Natural killer cell (primary cell): ENCODE measurements at regions of chrX and their contacts with region 1.

Region 1: DNA sequence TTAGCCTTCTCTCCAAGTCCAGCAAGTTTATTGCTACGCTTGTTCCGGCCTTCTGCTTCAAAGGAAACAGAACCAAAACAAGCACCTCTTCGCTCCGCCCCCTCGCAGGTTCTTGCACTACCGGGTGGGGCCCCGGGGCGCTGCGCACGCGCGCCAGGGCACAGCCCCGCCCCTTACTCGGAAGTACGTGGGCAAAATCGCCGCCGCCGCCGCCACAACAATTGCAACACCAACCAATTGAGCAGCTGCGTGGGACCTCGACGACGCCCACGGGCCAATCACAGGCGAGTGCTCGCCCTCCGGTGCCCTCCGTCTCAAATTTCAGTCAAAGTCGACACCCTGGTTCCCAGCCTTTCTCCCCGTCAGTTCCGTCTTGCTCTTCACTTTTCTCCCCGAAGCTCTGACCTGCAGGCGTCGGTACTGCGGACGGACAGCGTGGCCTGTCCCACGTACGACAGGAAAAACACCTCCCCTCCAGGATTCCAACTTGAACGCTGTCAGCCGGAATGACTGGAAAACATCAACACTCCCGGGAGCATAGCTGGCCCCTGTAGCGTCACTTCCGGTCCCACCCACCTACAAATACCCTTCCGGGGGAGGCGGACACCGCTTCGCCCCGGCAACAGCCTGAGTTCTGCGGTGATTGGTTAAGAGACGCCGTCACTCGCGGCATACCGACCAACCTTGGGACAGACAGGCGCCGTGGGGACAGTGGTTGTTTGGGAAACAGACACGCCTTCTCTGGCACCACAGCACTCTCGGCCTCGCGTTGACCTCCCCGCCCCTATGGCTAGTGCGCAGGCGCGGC is 624 bp upstream of the OTUD5 start:
- DNase-seq: peak; percentile 88 to 97
- ATAC-seq: peak; percentile 75 to 88 (median 79)
- H3K4me3 ChIP-seq: peak overlapping the region; percentile 57
- H3K4me3 Mint-ChIP-seq: peak overlapping the region; percentile 96
- H3K27ac ChIP-seq: peak overlapping the region; percentile 98
- H3K27ac Mint-ChIP-seq: peak overlapping the region; percentile 100
- H3K4me1 ChIP-seq: peaks cover 42% of the 10 kb centered on the region
- H3K4me1 Mint-ChIP-seq: peaks cover 24 to 45% of the 10 kb centered on the region in 2 donors
- H3K27me3 ChIP-seq: no peaks in the 10 kb centered on the region
- H3K27me3 Mint-ChIP-seq: peaks cover 0 to 7% of the 10 kb centered on the region in 2 donors
- CTCF ChIP-seq: no peak

Region 2: DNA sequence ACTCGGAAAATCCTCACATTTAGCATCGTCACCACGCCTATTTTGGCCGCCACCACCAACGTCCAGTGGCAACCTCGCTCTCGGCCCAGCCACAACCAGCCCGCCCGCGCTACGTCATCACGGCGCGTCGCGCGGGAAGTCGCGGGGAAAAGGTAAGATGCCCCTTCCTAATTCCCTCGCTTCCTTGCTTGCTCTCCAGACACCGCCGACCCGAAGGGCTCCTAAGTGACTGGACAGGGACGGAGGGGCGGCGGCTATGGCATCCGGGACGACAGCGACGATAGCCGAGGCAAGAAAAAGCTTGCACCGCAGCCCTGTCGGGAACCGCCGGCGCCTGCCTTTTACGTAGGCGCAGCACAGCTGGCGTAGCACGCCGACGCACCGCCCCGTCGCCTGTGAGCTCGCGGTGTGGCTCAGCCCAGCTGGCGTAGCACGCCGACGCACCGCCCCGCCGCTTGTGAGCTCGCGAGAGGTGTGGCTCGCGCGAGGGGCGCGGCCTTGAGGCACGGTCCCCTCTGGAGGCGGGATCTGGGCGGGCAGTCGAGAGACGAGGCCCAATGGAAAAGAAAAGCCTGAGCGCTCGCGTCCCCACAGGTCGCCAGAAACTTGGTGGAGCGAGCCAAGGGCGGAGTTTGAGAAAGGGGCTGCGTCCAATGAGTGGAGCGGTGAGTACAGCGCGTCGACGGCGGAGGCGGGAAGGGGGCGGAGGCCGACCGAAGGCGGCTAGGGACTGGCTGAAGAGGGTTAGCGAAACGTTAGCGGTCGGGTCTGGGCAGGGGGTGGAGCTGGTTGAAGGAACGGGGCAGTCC is 156.5 kb before region 1 on chrX and contains the start of gene HDAC6:
- intact Hi-C with region 1: loop called (anchors 5 kb)
- DNase-seq: peak; percentile 90 to 97
- ATAC-seq: peak; percentile 80 to 94 (median 81)
- H3K4me3 ChIP-seq: peak within 1 kb of the TSS; percentile 91
- H3K4me3 Mint-ChIP-seq: peak within 1 kb of the TSS; percentile 96
- H3K27ac ChIP-seq: peak within 1 kb of the TSS; percentile 100
- H3K27ac Mint-ChIP-seq: peak within 1 kb of the TSS; percentile 97 to 98
- H3K4me1 ChIP-seq: peaks cover 16% of the 10 kb centered on the region
- H3K4me1 Mint-ChIP-seq: peaks cover 0 to 21% of the 10 kb centered on the region in 2 donors
- H3K27me3 ChIP-seq: no peaks in the 10 kb centered on the region
- H3K27me3 Mint-ChIP-seq: peaks cover 0 to 6% of the 10 kb centered on the region in 2 donors
- CTCF ChIP-seq: no peak
- total RNA-seq, gene HDAC6: 97.4 to 118 (median 101) TPM

Region 3: DNA sequence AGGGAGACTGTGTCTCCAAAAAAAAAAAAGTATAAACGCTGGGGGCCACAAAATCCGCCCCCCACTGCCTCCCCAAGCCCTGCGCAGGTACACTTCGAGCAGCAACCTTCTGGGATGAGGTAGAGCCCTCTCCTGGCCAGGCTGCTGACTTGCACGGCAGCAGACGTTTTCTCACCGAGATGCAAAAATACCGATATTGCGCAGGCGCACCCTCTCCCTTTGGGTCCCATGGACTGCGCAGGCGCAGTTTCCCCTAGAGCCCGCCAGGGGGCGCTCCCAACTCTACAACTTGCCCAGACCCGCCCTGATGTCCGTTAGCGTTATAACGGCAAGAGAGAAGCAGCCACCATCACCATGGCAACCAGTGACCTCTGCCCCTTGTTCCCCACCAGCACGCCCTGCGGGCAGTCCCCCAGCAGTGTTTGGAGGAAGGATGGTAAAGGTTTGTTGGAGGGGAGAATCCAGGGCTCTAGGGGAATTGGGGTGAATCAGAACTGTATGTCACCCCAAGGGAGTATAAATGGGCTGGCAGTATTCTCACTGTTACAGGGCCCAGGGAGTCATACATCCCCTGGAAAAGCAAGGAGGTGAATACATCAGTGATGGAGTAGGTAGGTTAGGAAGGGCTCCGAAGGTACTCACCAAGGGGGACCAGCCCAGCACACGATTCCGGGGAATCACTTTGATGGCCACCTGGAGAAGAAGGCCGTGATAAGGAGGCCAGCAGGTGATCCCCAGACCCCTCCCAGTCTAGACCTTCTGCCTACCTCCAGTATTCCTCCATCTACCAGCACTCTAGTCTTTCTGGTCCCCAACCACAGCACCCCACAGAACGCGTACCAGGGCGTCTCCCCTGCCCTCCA is 40.7 kb before region 1 on chrX:
- intact Hi-C with region 1: loop called (anchors 1 kb)
- DNase-seq: peak; percentile 85 to 92
- ATAC-seq: peak; percentile 45 to 72 (median 58)
- H3K4me3 ChIP-seq: peak overlapping the region; percentile 91
- H3K4me3 Mint-ChIP-seq: peak overlapping the region; percentile 91
- H3K27ac ChIP-seq: peak overlapping the region; percentile 90
- H3K27ac Mint-ChIP-seq: peak overlapping the region; percentile 96 to 99
- H3K4me1 ChIP-seq: peaks cover 74% of the 10 kb centered on the region
- H3K4me1 Mint-ChIP-seq: peaks cover 48 to 53% of the 10 kb centered on the region in 2 donors
- H3K27me3 ChIP-seq: no peaks in the 10 kb centered on the region
- H3K27me3 Mint-ChIP-seq: peaks cover 0 to 6% of the 10 kb centered on the region in 2 donors
- CTCF ChIP-seq: peak; percentile 76

Region 4: GRCh38 chrX:49002091-49002935 is 44.3 kb after region 1 on chrX and contains the start of gene GRIPAP1:
- intact Hi-C with region 1: loop called (anchors 1 kb)
- DNase-seq: peak; percentile 67 to 94
- ATAC-seq: peak; percentile 77 to 89 (median 78)
- H3K4me3 ChIP-seq: peak within 1 kb of the TSS; percentile 98
- H3K4me3 Mint-ChIP-seq: peak within 1 kb of the TSS; percentile 97
- H3K27ac ChIP-seq: peak within 1 kb of the TSS; percentile 99
- H3K27ac Mint-ChIP-seq: peak within 1 kb of the TSS; percentile 97 to 99
- H3K4me1 ChIP-seq: peaks cover 22% of the 10 kb centered on the region
- H3K4me1 Mint-ChIP-seq: peaks cover 16 to 35% of the 10 kb centered on the region in 2 donors
- H3K27me3 ChIP-seq: no peaks in the 10 kb centered on the region
- H3K27me3 Mint-ChIP-seq: no peaks in the 10 kb centered on the region
- CTCF ChIP-seq: no peak
- total RNA-seq, gene GRIPAP1: 120 to 141 (median 131) TPM

Region 5: DNA sequence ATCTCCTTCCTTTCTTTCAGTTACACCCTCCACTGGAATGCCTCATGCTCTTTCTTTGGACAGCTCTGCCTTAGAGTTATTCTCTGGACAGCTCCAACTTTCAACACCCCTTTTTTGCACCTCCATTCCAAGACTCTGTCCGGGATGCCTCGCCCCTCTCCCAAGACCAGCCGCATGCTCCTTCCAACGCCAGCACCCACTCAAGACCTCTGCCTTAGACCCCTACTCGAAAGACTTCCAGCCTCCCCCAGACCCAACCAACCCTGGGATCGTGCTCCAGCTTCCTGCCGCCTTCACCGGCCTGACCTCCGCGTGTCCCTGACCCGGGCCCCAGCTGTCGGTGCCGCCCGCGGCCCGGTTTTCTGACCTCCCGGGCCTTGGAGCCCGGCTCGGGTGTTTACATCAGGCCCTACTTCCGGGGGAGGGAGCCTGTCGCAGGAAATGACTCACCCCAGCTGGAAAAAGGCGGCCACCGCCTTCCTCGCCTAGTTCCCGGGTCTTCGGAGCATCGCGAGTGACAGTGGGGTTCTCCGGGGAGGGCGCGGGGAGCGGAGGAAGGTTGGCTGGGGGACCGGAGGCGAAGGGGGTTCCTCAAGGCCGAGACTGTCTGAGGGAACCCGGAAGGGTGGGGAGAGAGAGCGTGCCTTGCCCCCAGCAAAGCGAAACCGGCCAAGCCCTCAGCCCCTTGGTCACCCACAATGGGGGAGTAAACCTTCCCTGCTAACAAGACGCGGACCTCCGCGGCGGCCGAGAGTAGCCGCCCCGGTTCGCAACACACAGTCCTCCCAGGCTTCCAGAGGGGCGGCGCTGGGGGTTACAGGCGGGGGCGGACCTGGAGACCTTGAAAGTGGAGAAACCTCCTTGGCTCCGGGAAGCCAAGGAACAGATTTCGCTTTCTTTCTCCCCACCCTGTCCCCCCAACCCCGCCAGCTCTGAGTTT is 121.7 kb after region 1 on chrX and contains the start of gene WDR45:
- intact Hi-C with region 1: no loop called
- DNase-seq: peak; percentile 64 to 84
- ATAC-seq: peak; percentile 80 to 90 (median 83)
- H3K4me3 ChIP-seq: peak within 1 kb of the TSS; percentile 82
- H3K4me3 Mint-ChIP-seq: peak within 1 kb of the TSS; percentile 91
- H3K27ac ChIP-seq: peak within 1 kb of the TSS; percentile 96
- H3K27ac Mint-ChIP-seq: peak within 1 kb of the TSS; percentile 90 to 99
- H3K4me1 ChIP-seq: peaks cover 11% of the 10 kb centered on the region
- H3K4me1 Mint-ChIP-seq: peaks cover 7 to 14% of the 10 kb centered on the region in 2 donors
- H3K27me3 ChIP-seq: no peaks in the 10 kb centered on the region
- H3K27me3 Mint-ChIP-seq: no peaks in the 10 kb centered on the region
- CTCF ChIP-seq: no peak
- total RNA-seq, gene WDR45: 116 to 142 (median 134) TPM